ENCODE measurements at regions of chr9 and their contacts with region 1.

Region 1: DNA sequence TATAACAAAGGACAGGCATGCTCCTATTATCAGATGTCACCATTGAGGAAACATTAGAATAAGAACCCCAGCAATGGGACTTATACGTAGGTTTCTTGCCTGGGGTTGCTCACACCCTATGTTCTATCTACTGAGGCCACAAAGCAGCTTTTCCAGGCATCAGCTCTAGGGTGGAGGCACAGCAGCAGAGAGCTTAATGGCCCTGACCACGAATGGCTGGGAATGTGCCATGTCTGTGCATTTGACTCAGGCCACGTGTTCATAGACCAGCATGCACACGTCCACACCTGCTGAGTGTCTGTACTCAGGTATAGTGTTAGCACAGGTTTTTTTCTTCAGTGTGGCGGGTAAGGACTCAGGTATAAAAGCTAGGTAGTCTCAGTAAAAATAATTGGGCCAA is 129.4 kb downstream of the AOPEP start:
- DNase-seq: no peak
- H3K4me3 ChIP-seq: no peak overlapping the region
- H3K27ac ChIP-seq: no peak overlapping the region
- H3K4me1 ChIP-seq: no peaks in the 10 kb centered on the region
- H3K27me3 ChIP-seq: no peaks in the 10 kb centered on the region
- CTCF ChIP-seq: no peak
- POLR2A ChIP-seq: no peak

Region 2: DNA sequence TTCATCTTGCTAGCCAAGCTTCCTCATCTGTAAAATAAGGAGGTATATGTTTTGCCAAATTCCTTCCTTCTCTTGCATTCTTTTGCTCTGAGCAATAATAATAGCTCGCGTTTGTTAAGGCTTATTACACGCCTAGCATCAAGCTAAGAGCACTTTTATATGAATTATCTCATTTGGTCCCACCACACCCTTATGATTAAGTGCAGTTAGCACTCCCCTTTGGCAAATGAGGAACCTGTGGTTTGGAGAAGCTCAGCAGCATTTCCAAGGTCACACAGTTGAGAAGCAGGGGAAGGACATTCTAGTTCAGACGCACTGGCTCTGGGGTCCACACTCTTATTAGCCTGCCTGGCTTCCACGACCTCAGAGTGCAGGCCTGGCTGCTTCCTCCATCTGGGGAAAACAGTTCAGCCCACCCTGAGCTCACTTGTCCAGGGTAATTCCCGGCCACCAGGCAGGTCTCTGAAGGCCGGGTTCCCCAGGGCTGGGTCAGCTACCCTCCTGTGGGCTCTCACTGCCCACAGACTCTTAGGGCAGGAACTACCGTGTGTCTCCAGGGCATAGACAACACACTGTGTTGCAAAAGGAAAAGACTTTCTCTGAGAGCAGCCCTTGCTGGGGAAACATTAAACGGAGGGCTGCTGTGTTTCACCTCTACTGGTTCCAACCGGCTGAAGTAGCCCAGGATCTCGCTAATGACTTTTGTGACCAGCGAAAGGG is 206.6 kb before region 1 on chr9:
- intact Hi-C with region 1: no loop called
- DNase-seq: no peak
- H3K4me3 ChIP-seq: no peak overlapping the region
- H3K27ac ChIP-seq: peak overlapping the region in 1 of 5 donors; percentile 24
- H3K4me1 ChIP-seq: no peaks in the 10 kb centered on the region
- H3K27me3 ChIP-seq: no peaks in the 10 kb centered on the region
- CTCF ChIP-seq: no peak
- POLR2A ChIP-seq: no peak

Region 3: GRCh38 chr9:94908011-94908563 is 52.2 kb after region 1 on chr9:
- intact Hi-C with region 1: loop called in 1 of 2 experiments (anchors 5 kb)
- DNase-seq: peak in 1 of 7 donors; percentile 12
- H3K4me3 ChIP-seq: no peak overlapping the region
- H3K27ac ChIP-seq: peak overlapping the region in 2 of 5 donors; percentile 14 to 42
- H3K4me1 ChIP-seq: peaks cover 0 to 23% of the 10 kb centered on the region in 2 donors
- H3K27me3 ChIP-seq: no peaks in the 10 kb centered on the region
- CTCF ChIP-seq: no peak
- POLR2A ChIP-seq: no peak

Measured in adrenal gland (tissue), 19 donors.